Activated B cell treated with CpG ODN at 0.5 μM for 24 hours (primary cell): ENCODE measurements at regions of chr1 and their contacts with region 1.

Region 1: GRCh38 chr1:235105051-235106043 is 23.3 kb downstream of the TOMM20 start:
- DNase-seq: no peak
- ATAC-seq: no peak
- H3K4me3 Mint-ChIP-seq: peak overlapping the region; percentile 67
- H3K27ac Mint-ChIP-seq: peak overlapping the region; percentile 14
- H3K4me1 Mint-ChIP-seq: peaks cover 25% of the 10 kb centered on the region
- H3K27me3 Mint-ChIP-seq: no peaks in the 10 kb centered on the region
- CTCF ChIP-seq: no peak

Region 2: DNA sequence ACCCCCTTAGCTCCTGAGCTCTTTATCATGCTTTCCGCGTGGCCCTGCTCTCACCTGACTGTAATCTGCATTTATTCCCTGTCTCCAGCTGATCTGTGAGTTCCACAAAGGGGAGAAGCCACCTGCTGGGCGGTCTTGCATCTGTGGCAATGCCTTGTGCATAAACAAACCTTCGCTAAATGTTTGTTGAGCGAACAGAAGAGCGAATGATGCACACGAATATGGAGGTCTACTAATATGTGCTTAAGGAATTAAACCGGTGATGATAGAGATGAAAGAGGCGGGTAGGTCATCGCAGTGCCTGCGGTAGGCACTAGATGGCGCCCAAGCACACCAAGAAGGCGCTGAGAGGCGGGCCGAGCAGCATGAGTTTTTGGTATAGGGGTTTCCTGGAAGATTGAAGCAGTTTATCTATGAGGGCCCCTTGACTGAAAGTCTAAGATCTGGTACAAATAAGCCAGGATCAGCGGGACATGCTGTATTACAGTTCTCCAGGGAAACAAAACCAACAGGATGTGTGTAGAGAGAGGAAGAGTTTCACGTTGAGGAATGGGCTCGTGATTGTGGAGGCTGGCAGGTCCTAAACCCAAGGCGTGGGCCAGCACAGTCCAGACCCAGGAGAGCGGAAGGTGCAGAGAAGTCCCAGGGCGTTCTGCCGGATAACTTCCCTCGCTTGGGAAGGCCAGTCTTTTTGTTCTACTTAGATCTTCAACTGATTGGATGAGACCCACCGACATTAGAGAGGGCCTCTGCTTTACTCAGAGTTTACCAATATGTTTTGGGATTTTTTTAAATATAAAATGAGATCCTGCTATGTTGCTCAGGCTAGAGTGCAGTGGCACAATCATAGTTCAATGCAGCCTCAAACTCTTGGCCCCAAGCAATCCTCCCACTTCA is 11.4 kb before region 1 on chr1:
- CTCF ChIA-PET with region 1: interaction called, 12 read pairs
- POLR2A ChIA-PET with region 1: interaction called, 11 read pairs
- intact Hi-C with region 1: no loop called
- DNase-seq: peak; percentile 75
- ATAC-seq: peak; percentile 98
- H3K4me3 Mint-ChIP-seq: no peak overlapping the region
- H3K27ac Mint-ChIP-seq: no peak overlapping the region
- H3K4me1 Mint-ChIP-seq: peaks cover 5% of the 10 kb centered on the region
- H3K27me3 Mint-ChIP-seq: peaks cover 7% of the 10 kb centered on the region
- CTCF ChIP-seq: peak; percentile 92

Region 3: GRCh38 chr1:235128456-235129328 is 23.3 kb after region 1 on chr1 and contains the start of gene TOMM20:
- CTCF ChIA-PET with region 1: no interaction called
- POLR2A ChIA-PET with region 1: interaction called, 4 read pairs
- intact Hi-C with region 1: loop called (anchors 1 kb)
- DNase-seq: peak; percentile 91
- ATAC-seq: peak; percentile 93
- H3K4me3 Mint-ChIP-seq: peak within 1 kb of the TSS; percentile 97
- H3K27ac Mint-ChIP-seq: peak within 1 kb of the TSS; percentile 93
- H3K4me1 Mint-ChIP-seq: peaks cover 41% of the 10 kb centered on the region
- H3K27me3 Mint-ChIP-seq: no peaks in the 10 kb centered on the region
- CTCF ChIP-seq: no peak
- total RNA-seq, gene TOMM20: 80.6 and 82.7 TPM in 2 replicates